K562 (cell line): ENCODE measurements at regions of chr12 and their contacts with region 1.

Region 1: GRCh38 chr12:98373025-98373554 is 142.3 kb upstream of the TMPO start:
- DNase-seq: peak; percentile 26 to 65 (median 38)
- ATAC-seq: peak; percentile 90
- H3K4me3 ChIP-seq: no peak overlapping the region
- H3K27ac ChIP-seq: no peak overlapping the region
- H3K4me1 ChIP-seq: no peaks in the 10 kb centered on the region; a peak in 1 of 5 replicates
- H3K27me3 ChIP-seq: no peaks in the 10 kb centered on the region
- CTCF ChIP-seq: peak; percentile 55 to 77 (median 56); a peak in 5 of 6 replicates
- EP300 ChIP-seq: no peak
- POLR2A ChIP-seq: no peak
- RAD21 ChIP-seq: peak; percentile 68 to 86

Region 2: DNA sequence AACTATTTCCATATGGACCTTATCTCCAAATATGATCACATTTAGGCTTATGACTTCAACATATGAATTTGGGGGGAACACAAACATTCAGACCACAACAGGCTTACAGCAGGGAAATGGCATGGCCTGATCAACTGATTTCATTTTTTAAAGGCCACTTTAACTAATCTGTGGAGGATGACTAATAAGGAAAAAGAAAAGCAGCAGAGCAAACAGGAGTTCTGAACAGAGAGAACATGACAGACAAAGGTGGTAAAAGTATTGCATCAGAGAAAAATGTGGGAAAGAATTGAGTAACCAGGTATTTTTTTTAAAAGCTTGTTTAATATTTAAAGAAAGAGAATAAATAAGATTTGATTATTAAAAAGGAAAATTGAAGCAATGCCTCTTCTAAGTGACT is 223.8 kb before region 1 on chr12:
- CTCF ChIA-PET with region 1: no interaction called
- POLR2A ChIA-PET with region 1: no interaction called
- in situ Hi-C with region 1: no loop called
- intact Hi-C with region 1: no loop called
- DNase-seq: no peak
- ATAC-seq: no peak
- H3K4me3 ChIP-seq: no peak overlapping the region
- H3K27ac ChIP-seq: no peak overlapping the region
- H3K4me1 ChIP-seq: no peaks in the 10 kb centered on the region
- H3K27me3 ChIP-seq: no peaks in the 10 kb centered on the region
- CTCF ChIP-seq: no peak
- EP300 ChIP-seq: no peak
- POLR2A ChIP-seq: no peak
- RAD21 ChIP-seq: no peak

Region 3: DNA sequence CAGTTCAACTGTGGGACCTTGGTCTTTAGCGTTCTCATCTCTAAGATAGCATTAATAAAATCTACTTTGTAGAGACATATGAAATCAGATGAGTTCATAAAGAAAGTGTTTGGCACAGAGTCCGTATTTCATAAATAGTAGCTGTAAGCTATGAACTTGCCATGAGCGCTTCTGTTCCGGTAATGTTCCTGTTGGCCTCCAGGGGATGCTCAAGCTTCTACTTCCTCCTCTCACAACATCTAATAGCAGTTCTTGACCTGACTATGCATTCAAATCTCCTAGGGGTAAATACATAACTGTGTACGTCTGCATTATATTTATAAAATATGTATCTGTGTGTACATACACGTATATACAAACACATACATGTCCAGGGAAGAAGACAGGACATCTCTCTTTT is 145.9 kb before region 1 on chr12:
- CTCF ChIA-PET with region 1: no interaction called
- POLR2A ChIA-PET with region 1: no interaction called
- in situ Hi-C with region 1: no loop called
- intact Hi-C with region 1: loop called (anchors 1 kb)
- DNase-seq: peak in 3 of 4 experiments; percentile 13 to 23 (median 18)
- ATAC-seq: peak; percentile 84
- H3K4me3 ChIP-seq: no peak overlapping the region
- H3K27ac ChIP-seq: no peak overlapping the region
- H3K4me1 ChIP-seq: no peaks in the 10 kb centered on the region
- H3K27me3 ChIP-seq: no peaks in the 10 kb centered on the region
- CTCF ChIP-seq: peak; percentile 34 to 58 (median 55); a peak in 5 of 6 replicates
- EP300 ChIP-seq: no peak
- POLR2A ChIP-seq: no peak
- RAD21 ChIP-seq: peak; percentile 17 to 49; a peak in 3 of 4 replicates